CD8-positive, alpha-beta memory T cell (primary cell): ENCODE measurements at regions of chr1 and their contacts with region 1.

Region 1: GRCh38 chr1:26877326-26877725 is 12.8 kb downstream of the GPN2 start:
- DNase-seq: no peak
- H3K4me3 ChIP-seq: no peak overlapping the region
- H3K4me3 Mint-ChIP-seq: no peak overlapping the region
- H3K27ac ChIP-seq: no peak overlapping the region
- H3K27ac Mint-ChIP-seq: peak overlapping the region in 1 of 8 donors; percentile 61
- H3K4me1 ChIP-seq: no peaks in the 10 kb centered on the region
- H3K4me1 Mint-ChIP-seq: no peaks in the 10 kb centered on the region
- H3K27me3 ChIP-seq: no peaks in the 10 kb centered on the region
- H3K27me3 Mint-ChIP-seq: no peaks in the 10 kb centered on the region

Region 2: GRCh38 chr1:26602378-26602959 is 274.9 kb before region 1 on chr1:
- CTCF ChIA-PET with region 1: interaction called, 13 read pairs
- POLR2A ChIA-PET with region 1: no interaction called
- DNase-seq: peak in 3 of 5 donors; percentile 30 to 61 (median 56)
- H3K4me3 ChIP-seq: no peak overlapping the region
- H3K4me3 Mint-ChIP-seq: no peak overlapping the region
- H3K27ac ChIP-seq: no peak overlapping the region
- H3K27ac Mint-ChIP-seq: no peak overlapping the region
- H3K4me1 ChIP-seq: peaks cover 8% of the 10 kb centered on the region
- H3K4me1 Mint-ChIP-seq: peaks cover 7 to 10% (median 9%) of the 10 kb centered on the region in 3 donors
- H3K27me3 ChIP-seq: no peaks in the 10 kb centered on the region
- H3K27me3 Mint-ChIP-seq: peaks cover 0 to 2% of the 10 kb centered on the region in 2 donors

Region 3: GRCh38 chr1:26853156-26853555 is 24.2 kb before region 1 on chr1:
- CTCF ChIA-PET with region 1: interaction called, 15 read pairs
- POLR2A ChIA-PET with region 1: no interaction called
- DNase-seq: peak; percentile 56 to 85 (median 66)
- H3K4me3 ChIP-seq: no peak overlapping the region
- H3K4me3 Mint-ChIP-seq: no peak overlapping the region
- H3K27ac ChIP-seq: no peak overlapping the region
- H3K27ac Mint-ChIP-seq: peak overlapping the region in 4 of 8 donors; percentile 17 to 79 (median 68)
- H3K4me1 ChIP-seq: no peaks in the 10 kb centered on the region
- H3K4me1 Mint-ChIP-seq: peaks cover 0 to 4% (median 3%) of the 10 kb centered on the region in 3 donors
- H3K27me3 ChIP-seq: no peaks in the 10 kb centered on the region
- H3K27me3 Mint-ChIP-seq: peaks cover 0 to 3% of the 10 kb centered on the region in 2 donors

Region 4: DNA sequence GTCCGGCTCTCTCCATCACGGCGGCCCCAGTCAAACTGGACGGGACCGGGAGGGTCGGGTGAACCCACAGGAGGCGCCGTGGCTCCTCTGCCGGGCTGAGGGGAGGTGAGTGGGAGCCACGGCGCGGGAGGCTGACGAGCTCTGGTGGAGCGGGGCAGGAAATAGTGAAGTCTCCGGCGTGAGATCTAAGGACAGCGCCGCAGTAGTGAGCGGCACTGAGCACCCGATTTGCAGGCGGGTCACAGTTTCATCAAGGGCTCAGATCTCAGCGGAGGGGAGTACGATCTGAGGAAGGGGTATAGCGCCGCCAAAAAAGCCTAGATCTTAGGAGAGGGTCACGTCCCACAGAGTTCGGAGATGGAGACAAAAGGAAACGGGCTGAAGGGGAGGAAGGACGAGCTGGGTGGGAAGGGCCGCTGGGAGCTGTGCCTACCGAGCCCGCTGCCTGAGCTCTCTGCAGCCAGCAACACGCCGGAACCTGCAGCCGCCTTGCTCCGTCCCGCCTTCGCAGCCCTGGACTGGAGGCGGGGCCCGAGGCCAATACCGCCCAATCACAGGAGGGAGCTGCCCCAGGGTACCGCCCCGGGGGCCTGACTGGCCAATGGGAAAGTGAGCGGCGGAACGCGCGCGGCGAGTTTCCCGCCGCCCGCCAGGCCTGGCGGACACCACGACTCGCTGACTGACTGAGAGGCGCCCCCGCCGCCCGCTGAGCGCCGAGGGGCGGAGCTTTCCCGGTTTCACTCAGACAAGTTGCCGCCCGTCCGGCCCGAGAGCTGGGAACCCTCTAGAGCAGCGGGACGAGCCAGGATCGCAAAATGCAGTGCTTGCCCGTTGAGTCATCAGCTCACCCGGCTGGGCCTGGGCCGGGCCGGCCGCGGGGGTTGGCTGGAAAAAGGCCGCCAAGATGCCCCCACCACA is 12.5 kb before region 1 on chr1:
- CTCF ChIA-PET with region 1: interaction called, 15 read pairs
- POLR2A ChIA-PET with region 1: interaction called, 4 read pairs
- DNase-seq: peak; percentile 91 to 95 (median 94)
- H3K4me3 ChIP-seq: peak overlapping the region; percentile 97
- H3K4me3 Mint-ChIP-seq: peak overlapping the region; percentile 88 to 97 (median 93)
- H3K27ac ChIP-seq: peak overlapping the region; percentile 83
- H3K27ac Mint-ChIP-seq: peak overlapping the region; percentile 73 to 98 (median 92)
- H3K4me1 ChIP-seq: peaks cover 11% of the 10 kb centered on the region
- H3K4me1 Mint-ChIP-seq: peaks cover 14 to 28% (median 27%) of the 10 kb centered on the region in 3 donors
- H3K27me3 ChIP-seq: no peaks in the 10 kb centered on the region
- H3K27me3 Mint-ChIP-seq: no peaks in the 10 kb centered on the region